Brain microvascular endothelial cell (primary cell): ENCODE measurements at regions of chr1 and their contacts with region 1.

Region 1: DNA sequence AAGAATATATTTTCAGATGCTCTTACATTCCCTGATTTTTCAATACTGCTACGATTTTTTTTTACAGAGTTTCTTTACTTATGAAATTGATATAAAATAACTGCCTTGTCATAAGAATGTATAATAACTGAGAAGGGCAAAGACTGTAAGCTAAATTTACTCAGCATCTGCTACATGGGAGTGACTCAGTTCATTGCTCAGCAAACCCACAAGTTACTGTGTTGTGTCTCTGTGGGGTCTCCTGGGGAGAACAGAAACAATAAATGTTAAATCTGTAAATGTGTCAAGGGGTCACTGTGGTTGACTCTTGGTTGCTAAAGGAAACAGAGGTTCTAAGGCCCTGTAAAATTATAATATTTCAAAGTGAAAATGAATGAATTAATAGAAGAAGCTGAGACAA is 210.3 kb upstream of the CACYBP start:
- DNase-seq: peak; percentile 86
- H3K4me3 ChIP-seq: peak overlapping the region; percentile 12
- H3K27ac ChIP-seq: peak overlapping the region; percentile 90
- H3K27me3 ChIP-seq: no peaks in the 10 kb centered on the region
- CTCF ChIP-seq: no peak

Region 2: DNA sequence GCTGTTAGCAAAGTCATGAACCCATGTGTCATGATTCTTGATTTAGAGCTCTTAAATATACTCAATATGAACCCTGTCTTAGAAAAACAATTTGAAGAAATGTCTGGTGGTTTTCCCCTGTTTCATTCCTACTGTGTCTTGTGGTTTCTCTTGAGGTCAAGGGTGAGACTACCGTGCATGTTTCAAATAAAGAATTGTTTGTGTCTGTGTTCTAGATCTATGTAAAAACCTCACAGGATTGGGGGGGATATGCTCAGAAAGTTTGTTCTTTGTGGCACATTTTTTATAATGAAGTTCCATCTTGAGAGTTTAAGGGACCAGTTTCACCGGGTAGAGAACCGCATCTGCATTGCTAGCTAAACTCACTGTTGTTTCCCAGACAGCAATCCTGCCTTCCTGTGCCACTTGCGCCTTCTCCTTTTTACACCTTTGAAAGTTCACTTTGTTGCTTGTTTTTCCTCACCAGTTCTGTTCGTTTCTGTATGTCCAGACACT is 179.4 kb after region 1 on chr1:
- in situ Hi-C with region 1: loop called (anchors 25 kb)
- DNase-seq: peak; percentile 83
- H3K4me3 ChIP-seq: no peak overlapping the region
- H3K27ac ChIP-seq: peak overlapping the region; percentile 27
- H3K27me3 ChIP-seq: peaks cover 4% of the 10 kb centered on the region
- CTCF ChIP-seq: no peak

Region 3: GRCh38 chr1:175124861-175125260 is 335.5 kb after region 1 on chr1:
- in situ Hi-C with region 1: no loop called
- DNase-seq: no peak
- H3K4me3 ChIP-seq: no peak overlapping the region
- H3K27ac ChIP-seq: no peak overlapping the region
- H3K27me3 ChIP-seq: no peaks in the 10 kb centered on the region
- CTCF ChIP-seq: no peak